ENCODE measurements at regions of chr1 and their contacts with region 1.

Region 1: GRCh38 chr1:213852107-213852506 is 135.7 kb upstream of the PROX1 start:
- DNase-seq: peak; percentile 47 to 66 (median 62)
- H3K4me3 ChIP-seq: no peak overlapping the region
- H3K4me3 Mint-ChIP-seq: no peak overlapping the region
- H3K27ac ChIP-seq: no peak overlapping the region
- H3K27ac Mint-ChIP-seq: no peak overlapping the region
- H3K4me1 ChIP-seq: peaks cover 28% of the 10 kb centered on the region
- H3K4me1 Mint-ChIP-seq: peaks cover 2 to 14% (median 5%) of the 10 kb centered on the region in 4 donors
- H3K27me3 ChIP-seq: no peaks in the 10 kb centered on the region
- H3K27me3 Mint-ChIP-seq: no peaks in the 10 kb centered on the region

Region 2: DNA sequence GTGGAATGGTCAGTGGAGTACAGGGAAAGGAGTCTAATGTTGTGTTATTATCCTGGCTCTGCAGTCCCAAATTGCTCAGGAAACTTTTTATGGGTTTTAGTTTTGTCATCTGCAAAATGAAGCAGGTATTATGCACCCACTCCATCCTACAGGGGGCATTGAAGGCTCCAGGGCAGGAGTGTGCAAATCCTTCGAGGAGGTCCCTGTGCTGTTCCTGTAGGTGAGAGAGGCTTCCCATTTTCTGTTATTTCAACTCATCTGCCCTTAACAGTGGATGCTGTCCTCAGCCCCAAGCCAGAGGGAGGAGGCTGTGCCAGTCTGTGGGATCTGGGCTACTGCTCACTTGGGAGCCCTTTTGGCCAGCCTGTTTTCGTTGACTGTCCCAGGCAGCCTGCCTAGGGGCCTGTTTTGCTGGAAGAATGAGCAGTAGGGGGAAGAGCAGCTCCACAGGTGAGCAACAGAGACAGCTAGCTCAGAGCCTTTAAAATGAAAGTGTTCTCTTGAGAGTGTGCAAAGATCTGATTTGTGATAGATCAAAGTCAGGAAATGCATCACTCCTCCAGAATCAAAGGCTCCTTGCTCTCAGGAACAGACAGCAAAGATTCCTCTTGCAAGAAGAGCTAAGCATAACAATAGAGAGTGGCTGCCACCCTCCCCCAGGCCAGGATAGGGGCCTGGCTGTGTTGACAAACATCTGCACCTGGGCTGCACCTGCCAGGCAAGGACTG is 182.0 kb before region 1 on chr1:
- CTCF ChIA-PET with region 1: interaction called, 4 read pairs
- POLR2A ChIA-PET with region 1: no interaction called
- intact Hi-C with region 1: loop called (anchors 1 kb)
- DNase-seq: peak; percentile 42 to 60 (median 58)
- H3K4me3 ChIP-seq: no peak overlapping the region
- H3K4me3 Mint-ChIP-seq: peak overlapping the region in 3 of 8 donors; percentile 10 to 56 (median 10)
- H3K27ac ChIP-seq: no peak overlapping the region
- H3K27ac Mint-ChIP-seq: peak overlapping the region in 6 of 7 donors; percentile 25 to 86 (median 60)
- H3K4me1 ChIP-seq: peaks cover 13% of the 10 kb centered on the region
- H3K4me1 Mint-ChIP-seq: peaks cover 4 to 11% (median 9%) of the 10 kb centered on the region in 4 donors
- H3K27me3 ChIP-seq: no peaks in the 10 kb centered on the region
- H3K27me3 Mint-ChIP-seq: peaks cover 0 to 1% of the 10 kb centered on the region in 2 donors

Region 3: GRCh38 chr1:213783893-213784292 is 68.2 kb before region 1 on chr1:
- CTCF ChIA-PET with region 1: no interaction called
- POLR2A ChIA-PET with region 1: interaction called, 3 read pairs
- intact Hi-C with region 1: loop called (anchors 1 kb)
- DNase-seq: peak in 4 of 5 donors; percentile 11 to 20 (median 16)
- H3K4me3 ChIP-seq: no peak overlapping the region
- H3K4me3 Mint-ChIP-seq: peak overlapping the region in 4 of 8 donors; percentile 21 to 75 (median 70)
- H3K27ac ChIP-seq: no peak overlapping the region
- H3K27ac Mint-ChIP-seq: peak overlapping the region in 1 of 7 donors; percentile 52
- H3K4me1 ChIP-seq: no peaks in the 10 kb centered on the region
- H3K4me1 Mint-ChIP-seq: peaks cover 0 to 13% (median 6%) of the 10 kb centered on the region in 4 donors
- H3K27me3 ChIP-seq: no peaks in the 10 kb centered on the region
- H3K27me3 Mint-ChIP-seq: peaks cover 0 to 2% of the 10 kb centered on the region in 2 donors

Region 4: GRCh38 chr1:213864091-213864490 is 12.0 kb after region 1 on chr1:
- CTCF ChIA-PET with region 1: no interaction called
- POLR2A ChIA-PET with region 1: no interaction called
- intact Hi-C with region 1: no loop called
- DNase-seq: no peak
- H3K4me3 ChIP-seq: no peak overlapping the region
- H3K4me3 Mint-ChIP-seq: no peak overlapping the region
- H3K27ac ChIP-seq: no peak overlapping the region
- H3K27ac Mint-ChIP-seq: no peak overlapping the region
- H3K4me1 ChIP-seq: no peaks in the 10 kb centered on the region
- H3K4me1 Mint-ChIP-seq: no peaks in the 10 kb centered on the region
- H3K27me3 ChIP-seq: no peaks in the 10 kb centered on the region
- H3K27me3 Mint-ChIP-seq: no peaks in the 10 kb centered on the region

Region 5: DNA sequence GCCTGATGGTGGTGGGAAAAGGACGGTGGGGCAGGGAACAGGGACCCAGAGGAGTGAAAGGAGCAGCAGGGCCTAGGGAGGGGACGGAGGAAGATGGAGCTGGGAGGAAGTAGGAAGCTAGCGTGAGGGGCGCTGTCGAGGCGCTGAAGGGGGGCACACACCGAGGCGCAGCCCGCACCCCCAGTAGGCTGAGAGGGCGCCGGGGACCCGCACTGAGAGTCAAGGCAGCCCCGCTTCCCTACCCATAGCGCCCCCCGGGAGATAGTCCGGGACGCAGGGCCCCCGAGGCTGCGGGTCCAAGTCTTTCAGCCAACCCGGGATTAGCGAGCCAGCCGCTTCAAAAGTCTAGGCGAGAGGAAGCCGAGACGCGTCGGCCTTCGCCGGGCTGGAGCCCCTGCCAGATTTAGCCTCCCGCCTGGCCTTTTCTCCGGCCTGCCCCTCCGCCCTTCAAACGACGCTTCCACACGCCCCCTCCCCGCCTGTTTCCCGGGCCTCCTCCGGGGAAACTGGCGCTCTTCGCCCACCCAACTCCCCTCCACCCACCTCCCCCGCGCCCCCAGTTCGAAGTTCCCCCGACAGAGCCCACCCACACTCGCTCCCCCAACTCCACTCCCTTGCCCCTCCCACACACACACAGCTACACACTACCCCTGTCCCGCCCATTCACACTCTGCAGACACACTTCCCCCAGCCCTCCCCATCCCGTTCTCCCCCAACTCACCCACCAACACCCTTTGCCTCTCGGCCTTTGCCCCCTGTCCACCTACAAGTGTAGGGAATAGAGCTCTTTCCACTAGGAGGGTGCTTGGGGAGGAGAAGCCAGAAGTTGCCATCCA is 127.9 kb after region 1 on chr1:
- CTCF ChIA-PET with region 1: no interaction called
- POLR2A ChIA-PET with region 1: no interaction called
- intact Hi-C with region 1: loop called (anchors 5 kb)
- DNase-seq: no peak
- H3K4me3 ChIP-seq: no peak overlapping the region
- H3K4me3 Mint-ChIP-seq: peak overlapping the region in 1 of 8 donors; percentile 54
- H3K27ac ChIP-seq: no peak overlapping the region
- H3K27ac Mint-ChIP-seq: no peak overlapping the region
- H3K4me1 ChIP-seq: no peaks in the 10 kb centered on the region
- H3K4me1 Mint-ChIP-seq: peaks cover 0 to 20% (median 9%) of the 10 kb centered on the region in 4 donors
- H3K27me3 ChIP-seq: peaks cover 56% of the 10 kb centered on the region
- H3K27me3 Mint-ChIP-seq: peaks cover 53 to 58% of the 10 kb centered on the region in 2 donors

Measured in CD4-positive, alpha-beta memory T cell (primary cell).